A549 (cell line): ENCODE measurements at regions of chr7 and their contacts with region 1.

Region 1: DNA sequence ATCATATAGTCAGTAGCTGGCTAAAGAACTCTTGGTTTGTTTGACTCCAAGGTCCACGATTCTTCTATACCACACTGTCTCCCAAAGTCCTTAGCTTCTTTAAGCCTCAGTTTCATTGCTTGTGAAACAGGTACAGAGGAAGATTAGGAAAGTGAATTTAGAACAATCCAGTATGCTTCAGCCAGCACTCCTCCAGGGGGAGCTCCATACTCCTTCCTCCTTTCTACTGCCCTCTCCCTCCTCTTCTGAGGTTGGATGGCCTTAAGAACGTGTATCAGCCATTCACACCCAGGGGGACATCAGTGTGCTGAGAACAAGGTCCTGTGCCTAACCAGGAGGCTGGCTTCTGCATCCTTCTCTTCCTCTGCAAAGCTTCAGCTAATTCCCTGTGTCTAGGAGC is 54.8 kb upstream of the CALD1 start:
- DNase-seq: peak; percentile 44 to 55
- ATAC-seq: peak; percentile 81 to 91; a peak in 5 of 6 replicates
- H3K4me3 ChIP-seq: no peak overlapping the region
- H3K27ac ChIP-seq: no peak overlapping the region
- H3K4me1 ChIP-seq: no peaks in the 10 kb centered on the region
- CTCF ChIP-seq: peak; percentile 59
- EP300 ChIP-seq: no peak
- POLR2A ChIP-seq: no peak
- RAD21 ChIP-seq: peak; percentile 59 to 67

Region 2: GRCh38 chr7:134676743-134677142 is 47.9 kb before region 1 on chr7:
- CTCF ChIA-PET with region 1: no interaction called
- POLR2A ChIA-PET with region 1: no interaction called
- DNase-seq: no peak
- ATAC-seq: no peak
- H3K4me3 ChIP-seq: no peak overlapping the region
- H3K27ac ChIP-seq: no peak overlapping the region
- H3K4me1 ChIP-seq: no peaks in the 10 kb centered on the region
- CTCF ChIP-seq: no peak
- EP300 ChIP-seq: no peak
- POLR2A ChIP-seq: no peak
- RAD21 ChIP-seq: no peak

Region 3: GRCh38 chr7:134701272-134701671 is 23.3 kb before region 1 on chr7:
- CTCF ChIA-PET with region 1: interaction called, 10 read pairs
- POLR2A ChIA-PET with region 1: no interaction called
- DNase-seq: peak; percentile 38 to 58
- ATAC-seq: peak; percentile 48 to 78; a peak in 3 of 6 replicates
- H3K4me3 ChIP-seq: no peak overlapping the region
- H3K27ac ChIP-seq: no peak overlapping the region
- H3K4me1 ChIP-seq: peaks cover 14% of the 10 kb centered on the region
- CTCF ChIP-seq: peak; percentile 44
- EP300 ChIP-seq: no peak
- POLR2A ChIP-seq: no peak
- RAD21 ChIP-seq: peak; percentile 41 to 70; a peak in 4 of 5 replicates

Region 4: DNA sequence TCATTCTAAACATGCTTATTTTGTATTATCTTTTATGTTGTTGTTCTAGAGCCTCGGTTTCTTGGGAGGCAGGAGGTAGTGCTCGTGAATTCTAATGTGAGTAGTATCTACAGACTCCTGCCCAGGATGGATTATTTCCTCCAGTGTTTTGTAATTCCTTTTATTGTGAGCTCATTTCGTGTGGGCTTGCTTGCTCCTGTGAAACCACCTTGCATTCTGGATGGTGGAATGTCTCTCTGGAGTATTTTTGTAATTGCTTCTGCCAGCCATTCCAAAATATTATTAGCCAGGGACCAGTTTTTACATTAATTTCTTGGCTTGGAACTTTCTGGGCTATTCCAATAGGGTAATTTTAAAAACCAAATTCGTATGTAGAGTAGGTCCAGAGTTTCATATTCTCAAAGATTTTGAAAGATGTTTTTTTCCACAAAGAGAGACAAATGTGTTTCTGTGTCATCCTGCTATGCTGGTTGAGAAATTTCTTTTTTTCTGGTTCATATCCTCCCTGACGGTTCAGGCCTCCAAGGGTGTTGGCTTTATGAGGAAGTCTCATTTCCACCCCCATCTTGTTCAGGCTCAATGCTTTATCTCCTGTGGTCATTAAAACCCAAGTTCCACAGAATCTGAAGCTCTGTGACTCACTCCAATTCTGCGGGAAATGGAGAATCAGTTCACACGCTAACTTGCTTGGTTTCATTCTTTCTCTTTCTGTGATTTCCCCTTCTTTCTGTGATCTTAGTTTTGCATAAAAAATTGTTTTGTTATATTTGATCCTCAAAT is 13.2 kb after region 1 on chr7:
- CTCF ChIA-PET with region 1: interaction called, 11 read pairs
- POLR2A ChIA-PET with region 1: no interaction called
- DNase-seq: no peak
- ATAC-seq: no peak
- H3K4me3 ChIP-seq: no peak overlapping the region
- H3K27ac ChIP-seq: no peak overlapping the region
- H3K4me1 ChIP-seq: no peaks in the 10 kb centered on the region
- CTCF ChIP-seq: no peak
- EP300 ChIP-seq: no peak
- POLR2A ChIP-seq: no peak
- RAD21 ChIP-seq: no peak